Activated T-helper 1 cell treated with anti-CD3 and anti-CD28 coated beads, Interleukin-12 subunit alpha, Interleukin-12 subunit beta, Interleukin-2, Interleukin-4 antibody, amounts not matched to agents 30 ng/mL and 10 ng/mL and 1 ng/mL, durations not matched to agents 14 hours and 24 hours and 36 hours (primary cell): ENCODE measurements at regions of chr10 and their contacts with region 1.

Region 1: DNA sequence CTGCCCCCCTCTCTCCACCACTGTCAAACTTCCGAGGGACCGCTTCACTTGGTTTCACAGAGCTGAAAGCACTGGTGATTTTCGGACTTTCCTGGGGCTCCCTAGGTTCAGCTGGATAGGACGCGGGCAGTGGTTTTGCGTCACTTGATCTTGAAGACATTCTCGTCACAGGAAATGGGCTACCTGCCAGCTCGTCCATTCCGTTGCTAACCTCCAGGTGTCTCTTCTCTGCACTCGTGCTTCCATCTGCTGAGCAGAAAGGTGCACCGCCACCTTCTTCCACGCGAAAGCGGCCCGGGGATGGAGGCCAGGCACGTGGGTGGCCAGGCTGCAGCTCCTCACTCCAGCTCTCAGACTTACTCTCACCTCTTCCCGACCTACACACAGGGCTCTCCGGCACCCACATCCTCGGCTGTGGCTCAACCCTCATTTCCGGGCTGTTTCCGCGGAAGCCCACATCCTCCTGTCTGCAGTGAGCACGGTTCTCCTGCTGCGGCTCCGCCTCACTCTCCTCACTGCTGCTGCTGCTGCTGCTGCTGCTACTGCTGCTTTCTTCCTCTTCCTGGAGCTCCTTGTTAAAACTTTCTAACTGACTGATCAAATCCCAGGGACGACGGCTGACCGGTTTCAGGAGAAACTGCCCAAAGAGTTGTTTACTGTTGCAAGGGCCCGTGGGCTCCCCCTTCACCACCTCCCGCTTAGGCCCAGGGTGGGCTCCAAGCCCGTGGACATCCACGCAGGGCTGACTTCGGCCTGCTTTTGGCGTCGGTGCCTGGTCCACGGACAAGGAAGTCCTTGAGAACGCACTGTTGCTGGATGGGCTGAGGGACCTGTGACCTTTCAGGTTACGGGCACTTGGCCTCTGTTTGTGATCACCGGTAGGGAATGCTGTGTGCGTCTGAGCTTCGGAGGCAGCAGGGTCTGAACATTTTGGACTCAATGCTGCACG is 32.1 kb downstream of the JCAD start:
- DNase-seq: peak; percentile 93
- H3K4me3 Mint-ChIP-seq: peak overlapping the region; percentile 73
- H3K27ac Mint-ChIP-seq: peak overlapping the region; percentile 93
- H3K4me1 Mint-ChIP-seq: peaks cover 45% of the 10 kb centered on the region
- H3K27me3 Mint-ChIP-seq: peaks cover 22% of the 10 kb centered on the region

Region 2: DNA sequence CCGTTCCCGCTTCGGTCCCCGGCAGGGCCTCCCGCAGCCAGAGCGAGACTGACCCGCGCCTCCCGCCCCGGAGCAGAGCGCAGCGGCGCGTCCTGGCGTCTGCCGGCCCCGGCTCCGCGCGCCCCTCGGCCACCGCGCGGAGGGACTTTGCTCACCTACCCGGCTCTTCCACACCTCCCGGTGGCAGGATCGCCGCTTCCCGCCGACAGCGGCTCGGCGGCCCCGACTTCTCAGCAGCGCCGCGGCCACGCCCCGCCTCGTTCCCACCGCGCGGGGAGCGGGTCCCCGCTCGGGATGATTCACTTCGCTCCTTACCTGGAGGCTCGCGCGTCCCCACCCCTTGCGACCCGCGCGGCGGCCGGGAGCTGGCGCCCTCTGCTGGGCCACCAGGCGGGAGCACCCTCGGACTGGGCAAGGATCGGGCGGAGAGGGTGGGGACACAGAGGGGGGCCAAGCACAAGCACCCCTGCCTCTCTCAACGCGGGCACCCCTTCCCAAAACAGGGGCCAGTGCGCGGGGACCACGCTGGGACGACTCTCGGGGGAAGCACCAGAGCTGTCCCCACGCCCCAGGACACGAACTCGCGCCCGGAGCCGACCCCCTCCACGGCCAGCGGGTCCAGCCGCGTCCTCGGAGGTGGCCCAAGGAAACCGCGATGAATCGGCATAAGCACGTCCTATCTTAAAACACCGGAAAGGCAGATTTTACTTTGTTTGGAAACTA is 291.6 kb before region 1 on chr10:
- intact Hi-C with region 1: loop called (anchors 1 kb)
- DNase-seq: peak; percentile 79
- H3K4me3 Mint-ChIP-seq: peak overlapping the region; percentile 80
- H3K27ac Mint-ChIP-seq: peak overlapping the region; percentile 67
- H3K4me1 Mint-ChIP-seq: peaks cover 10% of the 10 kb centered on the region
- H3K27me3 Mint-ChIP-seq: peaks cover 45% of the 10 kb centered on the region

Region 3: GRCh38 chr10:30048768-30049517 is 21.6 kb after region 1 on chr10:
- intact Hi-C with region 1: loop called (anchors 2 kb)
- DNase-seq: no peak
- H3K4me3 Mint-ChIP-seq: peak overlapping the region; percentile 41
- H3K27ac Mint-ChIP-seq: no peak overlapping the region
- H3K4me1 Mint-ChIP-seq: peaks cover 23% of the 10 kb centered on the region
- H3K27me3 Mint-ChIP-seq: peaks cover 42% of the 10 kb centered on the region

Region 4: DNA sequence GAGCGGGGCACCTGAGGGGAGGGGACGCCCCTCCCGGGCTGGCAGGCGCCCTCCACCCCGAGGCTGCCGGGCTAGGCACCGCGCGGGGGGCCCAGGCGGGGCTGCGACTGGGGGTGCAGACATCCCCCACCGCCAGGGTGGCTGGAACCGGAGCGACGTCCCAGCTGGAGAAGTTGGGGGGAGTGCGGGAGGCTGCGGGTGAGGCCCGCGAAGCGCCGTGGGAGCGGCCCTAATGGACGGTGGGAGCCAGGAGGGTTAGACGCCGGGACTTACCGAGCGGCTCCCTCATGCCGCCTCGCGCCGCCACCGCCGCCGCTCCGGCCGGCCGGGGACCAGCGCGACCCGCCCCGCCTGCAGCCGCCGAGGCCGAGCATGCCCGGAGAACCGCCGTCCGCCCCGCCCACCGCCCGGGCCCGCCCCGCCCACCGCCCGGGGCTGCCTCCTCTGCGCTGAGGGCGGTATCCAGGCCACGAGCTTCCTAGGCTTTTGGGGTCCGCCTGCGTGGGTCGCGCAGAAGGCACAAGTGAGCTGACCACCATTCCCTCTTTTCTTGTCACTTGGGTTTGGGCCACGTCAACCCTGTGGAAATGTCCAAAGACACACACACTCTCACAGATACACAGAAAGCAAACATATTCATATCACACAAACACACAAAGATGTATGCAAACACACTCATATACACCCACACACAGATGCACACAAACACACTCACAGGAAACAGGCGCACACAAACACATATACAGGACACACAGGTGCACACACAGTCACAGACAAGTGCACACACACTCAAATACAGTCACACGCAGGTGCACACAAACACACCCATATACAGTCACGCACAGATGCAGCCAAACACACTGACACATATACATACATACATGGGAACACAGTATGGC is 32.1 kb after region 1 on chr10 and contains the start of gene JCAD:
- intact Hi-C with region 1: loop called (anchors 1 kb)
- DNase-seq: peak; percentile 48
- H3K4me3 Mint-ChIP-seq: peak within 1 kb of the TSS; percentile 69
- H3K27ac Mint-ChIP-seq: no peak within 1 kb of the TSS
- H3K4me1 Mint-ChIP-seq: peaks cover 12% of the 10 kb centered on the region
- H3K27me3 Mint-ChIP-seq: peaks cover 76% of the 10 kb centered on the region
- total RNA-seq, gene JCAD: 0.15 and 0.31 TPM in 2 replicates

Region 5: DNA sequence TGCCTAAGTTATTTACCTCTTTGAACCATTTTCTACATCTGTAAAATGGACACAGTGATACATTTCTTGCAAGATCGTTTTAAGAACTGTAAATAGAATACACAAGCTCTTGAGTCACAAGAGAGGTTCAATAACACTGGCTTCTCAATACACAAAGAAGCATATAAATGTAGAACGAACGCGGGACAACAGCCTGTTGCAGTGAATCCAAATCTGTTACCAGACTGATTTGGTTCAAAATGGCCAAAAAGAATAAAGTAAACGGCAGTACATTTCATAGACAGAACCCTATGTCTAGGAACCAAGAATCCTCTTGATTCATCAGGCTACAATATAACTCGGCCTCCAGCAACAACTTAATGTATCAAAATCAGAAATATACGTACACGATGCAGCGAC is 321.0 kb after region 1 on chr10:
- intact Hi-C with region 1: loop called (anchors 5 kb)
- DNase-seq: no peak
- H3K4me3 Mint-ChIP-seq: peak overlapping the region; percentile 93
- H3K27ac Mint-ChIP-seq: peak overlapping the region; percentile 88
- H3K4me1 Mint-ChIP-seq: peaks cover 49% of the 10 kb centered on the region
- H3K27me3 Mint-ChIP-seq: no peaks in the 10 kb centered on the region

Region 6: GRCh38 chr10:30502266-30503060 is 475.1 kb after region 1 on chr10:
- intact Hi-C with region 1: loop called (anchors 10 kb)
- DNase-seq: peak; percentile 67
- H3K4me3 Mint-ChIP-seq: peak overlapping the region; percentile 3
- H3K27ac Mint-ChIP-seq: peak overlapping the region; percentile 62
- H3K4me1 Mint-ChIP-seq: peaks cover 81% of the 10 kb centered on the region
- H3K27me3 Mint-ChIP-seq: no peaks in the 10 kb centered on the region